CD4-positive, alpha-beta T cell (primary cell): ENCODE measurements at regions of chr6 and their contacts with region 1.

Region 1: DNA sequence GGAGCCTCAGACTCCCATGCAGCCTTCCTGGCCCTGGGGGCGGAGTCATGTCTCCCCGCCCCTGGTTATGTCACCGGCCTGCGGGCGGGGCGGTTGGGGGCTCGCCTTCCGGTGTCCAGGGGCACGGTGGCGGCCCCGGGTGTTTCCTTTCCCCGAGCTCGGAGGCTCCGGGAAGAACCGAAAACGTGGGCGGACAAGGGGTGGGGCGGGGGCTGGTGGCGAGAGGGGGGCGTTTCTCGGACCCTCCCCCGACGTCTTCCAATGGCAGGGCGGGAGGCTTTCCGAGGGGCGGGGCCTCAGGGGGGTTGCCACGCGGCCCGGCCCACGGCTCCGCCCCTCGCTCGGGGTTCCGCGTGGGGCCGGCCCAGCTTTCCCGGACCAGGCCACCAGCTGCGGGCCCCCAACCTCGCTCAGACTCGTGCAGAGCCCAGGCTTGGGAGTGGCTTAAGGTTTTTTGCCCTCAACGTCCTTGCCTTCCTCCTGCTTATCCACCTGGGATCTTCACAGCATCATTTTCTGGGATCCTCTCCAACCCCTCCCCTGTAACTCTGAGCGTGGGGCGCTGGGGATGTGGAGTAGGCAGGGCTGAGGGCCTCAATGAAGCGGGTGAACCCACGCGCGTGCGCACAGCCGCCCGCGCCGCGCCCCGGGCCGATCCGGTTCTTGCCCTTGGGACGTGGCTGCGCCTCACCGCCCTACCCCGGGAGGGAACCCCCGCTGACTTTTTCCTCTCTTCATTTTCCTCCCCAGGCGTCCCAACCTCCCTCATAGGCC is 2.1 kb upstream of the NRN1 start:
- DNase-seq: peak in 5 of 14 experiments; percentile 32 to 63 (median 54)
- ATAC-seq: peak; percentile 54
- H3K4me3 ChIP-seq: peak overlapping the region; percentile 47
- H3K4me3 Mint-ChIP-seq: peak overlapping the region; percentile 69
- H3K27ac ChIP-seq: no peak overlapping the region
- H3K27ac Mint-ChIP-seq: no peak overlapping the region
- H3K4me1 ChIP-seq: peaks cover 47% of the 10 kb centered on the region
- H3K4me1 Mint-ChIP-seq: peaks cover 45% of the 10 kb centered on the region
- H3K27me3 ChIP-seq: peaks cover 54 to 71% of the 10 kb centered on the region in 2 experiments
- H3K27me3 Mint-ChIP-seq: peaks cover 80% of the 10 kb centered on the region
- CTCF ChIP-seq: no peak

Region 2: GRCh38 chr6:5003604-5004372 is 1005.0 kb before region 1 on chr6 and contains the start of gene RPP40:
- CTCF ChIA-PET with region 1: no interaction called
- POLR2A ChIA-PET with region 1: no interaction called
- intact Hi-C with region 1: loop called in 1 of 2 experiments (anchors 5 kb)
- DNase-seq: peak; percentile 95 to 100 (median 98)
- ATAC-seq: peak; percentile 92
- H3K4me3 ChIP-seq: peak within 1 kb of the TSS; percentile 81
- H3K4me3 Mint-ChIP-seq: peak within 1 kb of the TSS; percentile 90
- H3K27ac ChIP-seq: peak within 1 kb of the TSS; percentile 83
- H3K27ac Mint-ChIP-seq: peak within 1 kb of the TSS; percentile 91
- H3K4me1 ChIP-seq: peaks cover 15% of the 10 kb centered on the region
- H3K4me1 Mint-ChIP-seq: peaks cover 17% of the 10 kb centered on the region
- H3K27me3 ChIP-seq: no peaks in the 10 kb centered on the region
- H3K27me3 Mint-ChIP-seq: no peaks in the 10 kb centered on the region
- CTCF ChIP-seq: peak; percentile 77
- total RNA-seq, gene RPP40: 0.36 to 0.69 TPM

Region 3: DNA sequence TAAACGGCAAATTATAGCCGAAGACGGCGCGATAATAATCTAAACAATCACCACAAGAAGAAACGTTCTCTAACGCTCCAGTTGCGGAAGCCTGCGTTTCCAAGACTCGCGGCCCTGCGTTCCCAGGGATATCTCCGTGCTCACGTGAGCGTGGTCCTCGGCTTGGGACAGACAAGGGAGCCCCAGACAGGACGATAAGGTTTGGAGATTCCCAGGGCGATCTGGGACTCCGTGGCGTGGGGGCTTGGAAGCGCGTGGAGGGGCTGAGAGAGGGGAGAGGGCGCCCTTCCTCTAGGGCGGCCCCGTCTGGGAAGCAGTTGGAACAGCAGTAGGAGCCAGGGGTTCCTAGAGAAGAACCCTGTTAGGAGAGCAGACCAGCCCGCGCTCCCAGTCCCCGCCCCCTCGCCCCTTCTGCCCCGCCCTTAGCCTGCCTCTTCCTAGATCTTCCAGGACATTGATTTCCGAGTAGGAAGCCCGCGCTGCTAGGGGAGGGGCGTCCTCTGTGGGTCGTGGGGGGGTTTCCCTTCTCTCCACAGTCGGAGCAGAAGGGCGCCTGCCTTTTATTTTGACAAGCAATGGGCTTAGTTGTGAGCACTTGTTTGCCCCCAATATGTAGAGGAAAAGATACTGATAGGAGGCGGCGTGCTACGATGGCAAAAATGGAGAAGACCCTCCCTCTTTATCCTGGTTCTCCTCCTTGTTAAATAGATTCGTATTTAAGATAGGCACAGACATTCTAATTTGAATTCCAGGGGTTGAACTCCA is 12.7 kb before region 1 on chr6:
- CTCF ChIA-PET with region 1: interaction called, 7 read pairs
- POLR2A ChIA-PET with region 1: interaction called, 16 read pairs
- intact Hi-C with region 1: loop called in 1 of 2 experiments (anchors 2 kb)
- DNase-seq: peak in 2 of 14 experiments; percentile 30 to 32
- ATAC-seq: no peak
- H3K4me3 ChIP-seq: peak overlapping the region; percentile 56
- H3K4me3 Mint-ChIP-seq: peak overlapping the region; percentile 96
- H3K27ac ChIP-seq: no peak overlapping the region
- H3K27ac Mint-ChIP-seq: no peak overlapping the region
- H3K4me1 ChIP-seq: peaks cover 59% of the 10 kb centered on the region
- H3K4me1 Mint-ChIP-seq: peaks cover 72% of the 10 kb centered on the region
- H3K27me3 ChIP-seq: peaks cover 85 to 94% of the 10 kb centered on the region in 2 experiments
- H3K27me3 Mint-ChIP-seq: peaks cover 98% of the 10 kb centered on the region
- CTCF ChIP-seq: no peak